ENCODE measurements at regions of chr1 and their contacts with region 1.

Region 1: DNA sequence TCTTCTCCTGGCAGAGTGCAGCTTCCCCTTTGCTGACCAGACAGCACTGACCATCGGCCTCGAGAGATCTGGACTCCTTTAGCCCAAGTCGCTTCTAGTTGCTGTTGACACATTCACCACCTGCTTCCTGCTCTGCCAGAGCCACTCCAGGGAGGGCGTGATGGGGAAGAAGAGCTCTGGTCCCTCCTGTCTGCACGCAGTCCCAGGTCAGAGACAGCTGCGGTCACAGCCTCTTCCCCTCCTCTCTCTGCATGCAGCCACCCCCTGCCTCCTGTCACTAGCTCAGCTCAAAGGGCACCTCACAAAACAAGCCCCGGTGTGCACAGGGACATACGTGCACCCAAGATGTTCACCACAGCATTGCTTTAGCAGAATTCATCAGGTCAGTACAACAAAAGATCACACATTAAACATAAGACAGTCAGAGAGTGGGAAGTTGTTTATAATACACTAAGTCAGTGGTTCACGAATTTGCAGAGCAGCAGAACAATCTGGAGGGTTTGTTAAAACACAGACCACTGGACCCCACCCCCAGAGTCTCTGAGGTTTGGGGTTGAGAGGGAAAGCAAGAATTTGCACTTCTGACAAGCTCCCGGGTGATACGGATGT is 132.9 kb downstream of the SYF2 start:
- DNase-seq: peak in 1 of 5 donors; percentile 38
- ATAC-seq: no peak
- H3K4me3 ChIP-seq: no peak overlapping the region
- H3K27ac ChIP-seq: peak overlapping the region in 1 of 12 donors; percentile 33
- H3K4me1 ChIP-seq: peaks cover 0 to 35% (median 0%) of the 10 kb centered on the region in 12 donors
- H3K27me3 ChIP-seq: peaks cover 0 to 9% (median 0%) of the 10 kb centered on the region in 9 donors
- CTCF ChIP-seq: no peak
- POLR2A ChIP-seq: no peak

Region 2: GRCh38 chr1:24935615-24936484 is 163.6 kb before region 1 on chr1:
- intact Hi-C with region 1: loop called in 8 of 10 experiments (anchors 2 to 5 kb)
- DNase-seq: no peak
- ATAC-seq: no peak
- H3K4me3 ChIP-seq: no peak overlapping the region
- H3K27ac ChIP-seq: no peak overlapping the region
- H3K4me1 ChIP-seq: peaks cover 0 to 19% (median 6%) of the 10 kb centered on the region in 12 donors
- H3K27me3 ChIP-seq: peaks cover 39 to 57% (median 45%) of the 10 kb centered on the region in 9 donors
- CTCF ChIP-seq: no peak
- POLR2A ChIP-seq: no peak

Region 3: GRCh38 chr1:25174730-25175612 is 75.5 kb after region 1 on chr1:
- intact Hi-C with region 1: no loop called
- DNase-seq: no peak
- ATAC-seq: no peak
- H3K4me3 ChIP-seq: no peak overlapping the region
- H3K27ac ChIP-seq: no peak overlapping the region
- H3K4me1 ChIP-seq: no peaks in the 10 kb centered on the region
- H3K27me3 ChIP-seq: no peaks in the 10 kb centered on the region
- CTCF ChIP-seq: no peak
- POLR2A ChIP-seq: no peak

Region 4: DNA sequence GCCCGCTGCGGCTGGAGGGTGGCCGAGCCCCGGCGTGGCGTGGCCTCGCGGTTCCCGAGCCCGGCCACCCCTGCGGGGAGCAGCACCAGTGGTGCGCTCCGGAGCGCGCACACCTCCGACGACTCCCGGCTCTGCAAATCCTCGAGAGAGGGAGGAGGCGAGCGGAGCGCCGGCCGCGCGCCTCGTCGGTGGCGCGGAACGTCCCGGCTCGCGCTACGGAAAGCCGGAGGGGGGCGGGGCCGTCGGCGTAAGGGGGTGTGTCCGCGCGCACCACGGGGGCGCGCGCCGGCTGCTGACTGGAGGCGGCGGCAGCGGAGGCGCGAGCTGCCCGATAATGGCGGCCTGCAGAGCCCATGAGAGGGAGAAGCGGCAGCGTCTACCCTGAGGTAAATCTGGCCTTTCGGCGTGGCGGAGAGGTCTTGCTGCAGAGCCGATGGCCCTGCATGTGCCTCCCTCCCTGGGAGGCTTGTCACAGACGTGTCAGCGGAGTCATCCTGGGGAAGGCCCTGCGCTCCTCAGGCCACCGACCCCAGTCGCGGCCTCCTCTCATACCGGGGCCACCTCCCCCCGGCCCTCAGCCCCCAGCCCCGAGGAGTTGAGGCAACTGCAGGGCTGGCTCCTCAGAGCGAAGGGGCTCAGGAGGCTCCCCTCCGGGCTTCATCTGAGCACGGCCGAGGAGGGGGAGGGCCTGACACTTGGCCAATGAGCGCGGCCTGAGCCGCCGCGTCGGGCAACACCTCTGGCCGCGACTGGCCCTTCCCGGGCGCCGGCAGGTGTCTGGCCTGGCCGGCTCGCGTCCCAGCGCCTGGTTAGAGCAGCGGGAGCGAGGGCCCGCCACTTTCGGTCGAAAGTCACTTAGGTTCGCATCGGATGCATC is 1012.3 kb after region 1 on chr1 and contains the start of gene PDIK1L:
- intact Hi-C with region 1: no loop called
- DNase-seq: peak; percentile 95 to 97 (median 96)
- ATAC-seq: peak; percentile 84 to 94 (median 92)
- H3K4me3 ChIP-seq: peak within 1 kb of the TSS; percentile 61 to 99 (median 96)
- H3K27ac ChIP-seq: peak within 1 kb of the TSS; percentile 86 to 99 (median 97)
- H3K4me1 ChIP-seq: peaks cover 0 to 40% (median 30%) of the 10 kb centered on the region in 12 donors
- H3K27me3 ChIP-seq: no peaks in the 10 kb centered on the region
- CTCF ChIP-seq: peak in 2 of 12 donors; percentile 13 to 18
- POLR2A ChIP-seq: peak in 1 of 2 donors; percentile 73
- total RNA-seq, gene PDIK1L: 3.9 to 9.3 (median 6.0) TPM